Panc1 (cell line): ENCODE measurements at regions of chr7 and their contacts with region 1.

Region 1: DNA sequence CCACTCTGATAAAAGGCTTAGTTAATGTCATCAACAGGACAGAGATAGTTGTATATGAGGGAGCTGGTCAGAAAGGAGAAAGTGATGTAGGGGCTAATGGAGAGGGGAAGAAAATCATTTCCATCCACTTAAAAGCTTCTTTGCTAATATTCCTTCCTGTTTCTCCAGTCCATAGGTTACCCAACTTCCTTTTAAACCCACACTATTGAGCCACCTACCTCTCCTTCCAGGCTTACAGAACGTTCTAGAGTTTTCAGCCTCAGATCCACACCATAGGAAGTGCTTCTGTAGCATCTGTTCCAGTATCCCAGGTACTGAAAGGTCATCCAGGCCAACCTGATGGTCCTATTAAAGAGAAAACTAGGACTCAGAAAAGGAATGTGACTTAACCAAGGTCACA is 28.2 kb downstream of the STRIP2 start:
- DNase-seq: no peak
- ATAC-seq: no peak
- H3K4me3 ChIP-seq: no peak overlapping the region
- H3K27ac ChIP-seq: no peak overlapping the region
- H3K4me1 ChIP-seq: no peaks in the 10 kb centered on the region
- H3K27me3 ChIP-seq: no peaks in the 10 kb centered on the region
- CTCF ChIP-seq: no peak

Region 2: DNA sequence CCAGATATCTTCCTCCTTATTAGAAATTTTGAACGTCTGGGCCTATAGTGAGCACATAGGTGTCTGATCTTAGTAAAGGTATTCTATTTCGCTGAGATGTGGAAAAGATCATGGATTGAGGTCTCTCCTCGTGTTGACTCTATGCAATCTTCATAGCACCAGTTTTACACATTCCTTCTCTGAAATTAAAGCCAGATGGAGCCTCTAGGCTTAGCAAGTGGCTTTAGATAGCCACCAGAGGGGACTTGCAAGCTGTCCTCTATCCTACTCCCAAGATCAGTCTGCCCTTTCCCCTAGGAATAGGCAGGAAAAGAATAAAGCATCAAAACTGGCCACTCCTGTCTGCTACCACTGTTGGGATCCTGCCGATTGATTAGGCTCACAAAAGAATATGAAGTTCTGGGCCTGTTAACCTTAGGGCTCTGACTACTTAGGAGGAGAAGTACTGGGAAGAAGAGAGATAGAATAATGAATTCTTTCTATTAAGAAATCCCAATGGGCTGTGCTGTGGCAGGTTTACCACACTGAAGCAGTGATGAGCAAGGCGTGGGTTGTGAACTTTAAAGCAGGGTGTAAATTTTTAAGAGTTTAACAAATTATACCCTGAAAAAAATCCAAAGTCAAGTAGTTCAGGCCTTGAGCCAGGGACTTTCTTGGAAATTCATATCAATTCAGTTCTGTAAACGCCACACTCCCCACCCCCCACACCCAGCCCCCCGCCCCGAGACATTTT is 30.3 kb before region 1 on chr7:
- CTCF ChIA-PET with region 1: no interaction called
- POLR2A ChIA-PET with region 1: no interaction called
- in situ Hi-C with region 1: no loop called
- intact Hi-C with region 1: loop called (anchors 1 kb)
- DNase-seq: no peak
- ATAC-seq: no peak
- H3K4me3 ChIP-seq: no peak overlapping the region
- H3K27ac ChIP-seq: no peak overlapping the region
- H3K4me1 ChIP-seq: peaks cover 4% of the 10 kb centered on the region; the same call in 1 of the 2 replicates
- H3K27me3 ChIP-seq: peaks cover 6% of the 10 kb centered on the region; the same call in 1 of the 2 replicates
- CTCF ChIP-seq: no peak